Aorta (tissue), 5 donors: ENCODE measurements at regions of chr11 and their contacts with region 1.

Region 1: DNA sequence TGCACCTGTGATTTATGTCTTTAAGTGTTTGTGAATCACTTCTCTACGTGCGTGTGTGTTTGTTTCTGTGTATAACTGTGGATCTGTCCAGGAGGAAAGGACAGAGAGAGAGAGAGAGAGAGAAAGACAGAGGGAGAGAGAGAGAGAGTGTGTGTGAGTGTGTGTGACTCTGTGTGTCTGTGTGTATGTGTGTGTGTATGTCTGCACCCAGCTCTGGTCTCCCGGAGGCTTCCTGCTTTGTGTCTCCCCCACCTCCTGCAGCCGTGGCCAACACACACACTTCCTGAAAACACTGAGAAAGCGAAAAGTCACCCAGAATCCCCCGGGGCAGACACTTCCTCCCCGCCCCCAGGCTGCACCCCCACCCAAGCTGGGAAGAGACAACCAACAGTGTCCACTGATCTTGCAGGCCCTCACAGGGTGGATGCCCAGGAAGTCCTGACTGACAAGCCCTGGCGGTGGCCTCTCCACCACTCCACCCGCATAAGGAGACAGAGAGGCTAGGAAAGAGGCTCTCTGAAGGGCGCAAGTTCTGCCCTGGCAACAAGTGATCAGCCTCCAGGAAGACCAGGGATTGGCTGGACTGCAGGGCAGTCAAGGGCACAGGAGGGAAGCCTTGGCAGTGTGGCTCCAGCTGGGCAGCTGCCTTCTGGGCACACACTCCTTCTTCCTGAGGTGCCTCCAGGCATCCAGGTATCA is 30.0 kb downstream of the ARAP1 start:
- DNase-seq: peak; percentile 93 to 94
- ATAC-seq: peak; percentile 91
- H3K4me3 ChIP-seq: peak overlapping the region; percentile 48 to 55
- H3K27ac ChIP-seq: peak overlapping the region in 1 of 2 donors; percentile 28
- H3K4me1 ChIP-seq: no peaks in the 10 kb centered on the region
- H3K27me3 ChIP-seq: no peaks in the 10 kb centered on the region

Region 2: GRCh38 chr11:72781313-72782050 is 59.3 kb after region 1 on chr11:
- intact Hi-C with region 1: loop called in 1 of 2 experiments (anchors 5 kb)
- DNase-seq: peak in 1 of 2 donors; percentile 85
- ATAC-seq: no peak
- H3K4me3 ChIP-seq: peak overlapping the region; percentile 70 to 87
- H3K27ac ChIP-seq: no peak overlapping the region
- H3K4me1 ChIP-seq: no peaks in the 10 kb centered on the region
- H3K27me3 ChIP-seq: no peaks in the 10 kb centered on the region

Region 3: GRCh38 chr11:72793425-72794367 is 71.5 kb after region 1 on chr11 and contains the start of gene STARD10:
- intact Hi-C with region 1: loop called (anchors 5 kb)
- DNase-seq: peak; percentile 97 to 99
- ATAC-seq: peak; percentile 99
- H3K4me3 ChIP-seq: peak within 1 kb of the TSS; percentile 23 to 47
- H3K27ac ChIP-seq: peak within 1 kb of the TSS; percentile 29 to 85
- H3K4me1 ChIP-seq: peaks cover 0 to 3% of the 10 kb centered on the region in 2 donors
- H3K27me3 ChIP-seq: no peaks in the 10 kb centered on the region
- total RNA-seq, gene STARD10: 17.7 to 30.7 TPM

Region 4: DNA sequence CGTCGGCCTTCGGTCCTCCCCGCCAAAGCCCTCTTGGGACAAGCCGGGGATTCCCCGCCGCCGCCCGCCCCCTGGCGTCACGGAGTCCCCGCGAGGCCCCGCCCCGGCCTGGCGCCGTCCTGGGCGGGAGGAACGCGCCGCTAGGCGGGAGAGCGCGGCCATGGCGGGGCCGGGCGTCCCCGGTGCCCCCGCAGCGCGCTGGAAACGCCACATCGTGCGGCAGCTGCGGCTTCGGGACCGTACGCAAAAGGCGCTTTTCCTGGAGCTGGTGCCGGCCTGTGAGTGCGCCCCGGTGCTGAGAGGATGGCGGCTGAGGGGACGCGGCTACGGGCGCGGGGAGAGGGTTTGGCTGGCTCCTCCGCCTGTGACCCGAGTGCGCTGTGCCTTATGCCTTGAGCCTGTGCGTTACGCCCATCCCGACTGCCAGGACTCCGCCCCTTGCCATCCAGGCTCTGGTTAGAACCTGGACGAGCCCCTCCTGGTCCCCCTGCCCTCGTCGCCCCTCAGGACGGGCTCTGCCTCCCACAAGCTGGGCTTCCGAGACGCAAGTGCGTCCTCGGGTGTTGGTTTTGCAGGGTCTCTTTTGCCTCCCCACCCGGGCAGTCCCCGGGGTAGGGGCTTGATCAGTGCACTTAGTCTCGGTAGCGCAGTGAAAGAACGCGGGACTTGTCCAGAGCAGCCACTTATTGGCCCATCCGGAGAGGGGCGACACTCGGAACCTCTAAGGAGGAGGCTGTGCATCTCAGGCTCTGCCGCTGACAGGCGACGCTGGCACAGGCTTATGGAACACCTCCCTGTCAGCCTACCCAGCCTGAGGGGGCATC is 92.3 kb after region 1 on chr11 and contains the start of gene ATG16L2:
- intact Hi-C with region 1: loop called (anchors 2 to 5 kb)
- DNase-seq: peak; percentile 93 to 97
- ATAC-seq: peak; percentile 96
- H3K4me3 ChIP-seq: peak within 1 kb of the TSS; percentile 46 to 86
- H3K27ac ChIP-seq: peak within 1 kb of the TSS; percentile 17 to 85
- H3K4me1 ChIP-seq: no peaks in the 10 kb centered on the region
- H3K27me3 ChIP-seq: peaks cover 0 to 2% of the 10 kb centered on the region in 2 donors
- total RNA-seq, gene ATG16L2: 31.1 to 74.8 TPM

Region 5: GRCh38 chr11:73177778-73178577 is 455.8 kb after region 1 on chr11:
- intact Hi-C with region 1: loop called (anchors 5 kb)
- DNase-seq: peak; percentile 93 to 96
- ATAC-seq: peak; percentile 91
- H3K4me3 ChIP-seq: no peak overlapping the region
- H3K27ac ChIP-seq: peak overlapping the region; percentile 71 to 92
- H3K4me1 ChIP-seq: no peaks in the 10 kb centered on the region
- H3K27me3 ChIP-seq: no peaks in the 10 kb centered on the region